ENCODE measurements at regions of chr10 and their contacts with region 1.

Region 1: DNA sequence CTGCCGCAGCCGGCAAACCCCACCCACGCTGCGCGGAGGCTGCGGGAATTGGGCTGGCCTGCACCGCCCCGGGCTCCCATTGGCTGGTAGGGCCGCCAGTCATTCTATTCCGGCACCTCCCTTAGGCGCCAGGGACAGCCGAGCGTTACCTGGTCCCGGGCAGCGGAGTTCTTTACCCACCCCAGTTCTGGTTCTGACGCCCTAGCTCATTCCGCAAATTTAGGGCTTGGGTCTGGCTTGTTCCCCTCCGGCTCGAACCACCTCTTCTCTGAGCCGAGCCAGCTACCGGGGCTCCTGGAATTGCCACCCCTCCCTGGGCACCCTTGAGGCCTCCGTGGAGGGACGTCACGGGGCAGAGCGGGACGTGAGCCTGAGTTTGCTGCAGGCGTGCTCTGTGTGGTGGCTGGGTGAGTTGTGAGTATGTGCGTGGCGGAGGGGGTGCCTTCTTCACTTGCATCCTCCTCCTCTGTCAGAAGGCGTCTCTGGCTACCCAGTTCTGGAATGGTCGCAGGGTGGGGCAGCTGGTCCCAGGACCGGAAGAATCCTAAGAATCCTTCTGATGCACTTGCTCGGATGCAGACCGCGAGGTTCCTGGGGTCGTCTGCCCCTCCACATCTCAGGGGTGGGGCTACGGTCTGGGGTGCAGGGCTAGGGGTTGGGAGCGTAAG is at the starts of genes PDZD7 and SFXN3:
- DNase-seq: peak; percentile 95 to 96 (median 96)
- H3K4me3 ChIP-seq: peak within 1 kb of the TSS; percentile 95 to 99
- H3K4me3 Mint-ChIP-seq: peak within 1 kb of the TSS; percentile 92 to 100 (median 96)
- H3K27ac ChIP-seq: peak within 1 kb of the TSS; percentile 92
- H3K27ac Mint-ChIP-seq: peak within 1 kb of the TSS; percentile 93 to 100 (median 99)
- H3K4me1 ChIP-seq: peaks cover 20% of the 10 kb centered on the region
- H3K4me1 Mint-ChIP-seq: peaks cover 10 to 34% (median 15%) of the 10 kb centered on the region in 4 donors
- H3K27me3 ChIP-seq: no peaks in the 10 kb centered on the region
- H3K27me3 Mint-ChIP-seq: no peaks in the 10 kb centered on the region
- total RNA-seq, gene PDZD7: 1.1 to 1.8 TPM
- total RNA-seq, gene SFXN3: 118 to 123 TPM

Region 2: DNA sequence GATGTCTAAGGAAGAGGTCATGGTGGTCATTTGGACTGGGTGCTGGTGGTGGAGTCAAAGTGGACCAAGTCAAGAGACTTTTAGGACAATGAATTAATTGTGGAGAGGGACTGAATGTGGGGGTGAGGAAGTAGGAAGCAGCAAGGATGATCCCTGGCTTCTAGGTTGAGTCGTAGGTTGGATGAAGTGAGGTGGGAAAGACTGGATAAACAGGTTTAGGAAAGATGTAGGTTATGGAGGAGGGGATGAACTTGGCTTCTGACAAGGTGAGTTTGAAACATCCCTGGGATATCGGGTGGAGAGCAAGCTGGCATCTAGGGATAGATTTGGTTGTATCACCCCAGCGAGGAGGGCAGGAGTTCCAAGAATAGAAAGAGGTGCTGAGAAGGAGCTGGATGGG is 54.4 kb before region 1 on chr10:
- CTCF ChIA-PET with region 1: no interaction called
- POLR2A ChIA-PET with region 1: no interaction called
- intact Hi-C with region 1: no loop called
- DNase-seq: no peak
- H3K4me3 ChIP-seq: no peak overlapping the region
- H3K4me3 Mint-ChIP-seq: no peak overlapping the region
- H3K27ac ChIP-seq: no peak overlapping the region
- H3K27ac Mint-ChIP-seq: peak overlapping the region in 4 of 7 donors; percentile 14 to 54 (median 46)
- H3K4me1 ChIP-seq: no peaks in the 10 kb centered on the region
- H3K4me1 Mint-ChIP-seq: peaks cover 0 to 3% (median under 1%) of the 10 kb centered on the region in 4 donors
- H3K27me3 ChIP-seq: no peaks in the 10 kb centered on the region
- H3K27me3 Mint-ChIP-seq: no peaks in the 10 kb centered on the region

Region 3: DNA sequence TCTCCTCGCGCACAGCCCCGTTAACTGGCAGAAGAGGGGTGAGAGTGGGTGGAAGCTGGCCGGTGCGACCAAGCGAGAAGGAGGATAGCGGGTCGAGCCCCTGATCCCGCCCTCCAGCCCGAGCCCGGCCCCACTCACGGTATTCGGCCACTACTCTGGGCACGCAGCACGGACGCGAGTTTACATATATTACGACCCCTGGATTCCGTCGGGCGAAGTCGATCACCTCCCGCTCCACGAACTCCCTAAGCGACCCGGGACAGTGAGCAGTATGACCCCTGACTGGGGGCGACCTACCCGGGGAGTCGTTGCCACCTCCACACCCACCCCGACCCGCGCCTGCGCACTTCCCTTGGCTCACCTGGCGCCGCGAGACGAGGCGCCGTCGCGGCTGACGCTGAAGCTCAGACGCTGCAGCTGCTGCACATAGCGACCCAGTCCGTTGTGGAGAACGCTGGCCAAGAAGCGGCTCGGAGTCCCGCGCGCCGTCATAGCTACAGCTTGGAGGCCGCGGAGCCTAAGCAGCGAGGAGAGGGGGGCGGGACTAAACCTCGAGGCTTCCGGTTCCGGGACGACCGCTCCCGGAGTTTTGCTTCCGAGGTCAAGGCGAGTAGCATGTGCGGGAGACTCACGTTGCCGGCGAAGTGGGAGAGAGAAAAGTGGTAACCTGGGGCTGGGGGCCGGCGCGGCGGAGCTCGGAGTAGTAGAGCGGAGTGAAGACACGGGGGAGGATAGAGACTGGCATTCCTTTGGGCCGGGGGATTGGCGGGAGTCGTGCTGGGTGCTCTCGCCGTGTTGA is 44.1 kb before region 1 on chr10 and contains the starts of genes MRPL43 and TWNK:
- CTCF ChIA-PET with region 1: interaction called, 4 read pairs
- POLR2A ChIA-PET with region 1: interaction called, 10 read pairs
- intact Hi-C with region 1: loop called (anchors 2 kb)
- DNase-seq: peak; percentile 83 to 90 (median 86)
- H3K4me3 ChIP-seq: peak within 1 kb of the TSS; percentile 67 to 91
- H3K4me3 Mint-ChIP-seq: peak within 1 kb of the TSS; percentile 85 to 98 (median 94)
- H3K27ac ChIP-seq: peak within 1 kb of the TSS; percentile 71
- H3K27ac Mint-ChIP-seq: peak within 1 kb of the TSS; percentile 41 to 97 (median 92)
- H3K4me1 ChIP-seq: peaks cover 25% of the 10 kb centered on the region
- H3K4me1 Mint-ChIP-seq: peaks cover 16 to 44% (median 32%) of the 10 kb centered on the region in 4 donors
- H3K27me3 ChIP-seq: no peaks in the 10 kb centered on the region
- H3K27me3 Mint-ChIP-seq: no peaks in the 10 kb centered on the region
- total RNA-seq, gene MRPL43: 65.8 to 71.6 TPM
- total RNA-seq, gene TWNK: 11.5 to 14.3 TPM

Region 4: GRCh38 chr10:101018600-101019439 is 12.4 kb before region 1 on chr10:
- CTCF ChIA-PET with region 1: interaction called, 25 read pairs
- POLR2A ChIA-PET with region 1: interaction called, 13 read pairs
- intact Hi-C with region 1: loop called (anchors 1 kb)
- DNase-seq: peak; percentile 53 to 68 (median 59)
- H3K4me3 ChIP-seq: no peak overlapping the region
- H3K4me3 Mint-ChIP-seq: no peak overlapping the region
- H3K27ac ChIP-seq: no peak overlapping the region
- H3K27ac Mint-ChIP-seq: no peak overlapping the region
- H3K4me1 ChIP-seq: peaks cover 7% of the 10 kb centered on the region
- H3K4me1 Mint-ChIP-seq: peaks cover 5 to 10% (median 6%) of the 10 kb centered on the region in 4 donors
- H3K27me3 ChIP-seq: peaks cover 11% of the 10 kb centered on the region
- H3K27me3 Mint-ChIP-seq: peaks cover 25 to 32% of the 10 kb centered on the region in 2 donors

Region 5: DNA sequence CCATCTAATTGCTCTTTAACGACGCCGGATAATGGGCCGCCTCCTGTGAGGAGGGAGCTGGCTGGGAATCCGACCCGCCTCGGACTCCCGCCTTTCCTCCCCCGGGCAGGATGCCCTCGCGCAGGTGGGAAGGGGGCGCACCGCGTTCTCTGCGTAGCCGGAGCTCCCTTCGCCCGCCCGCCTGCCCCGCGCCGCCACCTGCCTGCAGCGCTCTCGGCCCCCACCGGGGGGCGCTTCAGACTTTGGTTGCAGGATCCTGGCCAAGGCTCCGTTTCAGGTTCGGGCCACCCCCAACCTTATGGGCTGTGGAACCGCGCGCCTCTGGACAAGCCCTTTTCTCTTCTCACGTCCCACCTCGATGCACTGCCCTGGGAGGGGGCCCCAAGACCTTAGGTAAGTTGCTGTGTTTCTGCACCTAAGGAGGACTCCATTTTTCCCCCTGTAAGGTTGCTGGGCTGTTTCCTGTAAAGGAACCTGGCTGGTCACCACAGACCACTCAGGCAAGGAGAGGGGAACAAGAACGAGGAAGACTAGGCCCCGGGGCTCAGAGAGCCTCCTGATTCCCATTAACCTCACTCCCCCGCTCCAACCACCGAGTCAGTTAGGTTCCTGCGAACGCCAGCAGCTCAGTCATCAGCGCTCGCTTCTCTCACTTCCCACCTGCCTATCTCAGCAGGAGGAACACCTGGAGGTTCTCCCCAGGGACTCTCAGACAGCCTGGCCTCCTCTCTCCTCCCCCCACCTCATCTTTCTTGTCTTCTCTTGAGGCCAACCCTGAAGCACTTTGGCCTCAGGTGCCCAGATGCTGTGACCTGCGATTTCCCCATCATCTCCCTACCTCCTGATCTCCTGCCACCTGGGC is 19.2 kb after region 1 on chr10:
- CTCF ChIA-PET with region 1: interaction called, 645 read pairs
- POLR2A ChIA-PET with region 1: interaction called, 4 read pairs
- intact Hi-C with region 1: no loop called
- DNase-seq: peak; percentile 72 to 81 (median 73)
- H3K4me3 ChIP-seq: no peak overlapping the region
- H3K4me3 Mint-ChIP-seq: peak overlapping the region in 6 of 8 donors; percentile 13 to 65 (median 41)
- H3K27ac ChIP-seq: no peak overlapping the region
- H3K27ac Mint-ChIP-seq: peak overlapping the region in 1 of 7 donors; percentile 75
- H3K4me1 ChIP-seq: peaks cover 10% of the 10 kb centered on the region
- H3K4me1 Mint-ChIP-seq: peaks cover 3 to 25% (median 8%) of the 10 kb centered on the region in 4 donors
- H3K27me3 ChIP-seq: peaks cover 33% of the 10 kb centered on the region
- H3K27me3 Mint-ChIP-seq: peaks cover 35 to 38% of the 10 kb centered on the region in 2 donors

Region 6: DNA sequence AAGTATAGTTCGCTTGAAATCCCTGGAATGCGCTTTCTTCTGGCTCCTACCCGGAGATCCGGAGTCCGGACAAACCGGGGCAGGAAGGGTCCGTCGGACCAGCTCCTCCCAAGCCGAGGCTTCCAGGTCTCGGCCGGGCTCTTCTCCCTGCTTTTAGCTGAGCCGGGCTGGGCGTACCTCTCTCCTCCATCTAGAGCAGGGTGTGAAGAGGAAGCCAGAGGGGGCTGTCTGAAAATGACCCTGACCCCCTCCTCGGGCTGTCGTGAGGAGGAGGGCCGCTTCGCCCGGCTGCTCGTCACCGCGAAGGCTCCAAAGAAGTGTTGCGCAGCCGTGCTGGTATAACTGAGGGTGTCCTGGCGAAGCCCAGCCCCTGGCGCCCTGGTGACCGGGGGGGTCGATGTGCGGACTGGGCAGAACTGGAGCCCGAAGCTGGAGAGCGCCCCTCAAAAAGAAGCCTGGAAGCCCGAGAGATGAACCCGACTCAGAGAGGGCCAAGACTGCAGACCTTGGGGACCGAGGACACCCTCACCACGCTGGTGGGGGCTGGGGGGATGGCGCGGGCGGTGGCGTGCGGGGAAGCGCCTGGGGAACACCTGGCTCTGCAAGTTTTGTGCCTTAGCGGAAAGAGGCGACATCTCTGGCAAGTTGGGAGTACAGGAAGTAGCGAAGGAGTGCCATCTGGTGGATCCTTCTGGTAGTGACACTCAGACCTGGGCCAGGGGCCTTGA is 36.3 kb after region 1 on chr10:
- CTCF ChIA-PET with region 1: interaction called, 645 read pairs
- POLR2A ChIA-PET with region 1: interaction called, 17 read pairs
- intact Hi-C with region 1: no loop called
- DNase-seq: peak; percentile 68 to 78 (median 72)
- H3K4me3 ChIP-seq: peak overlapping the region; percentile 52 to 76
- H3K4me3 Mint-ChIP-seq: peak overlapping the region; percentile 90 to 97 (median 92)
- H3K27ac ChIP-seq: no peak overlapping the region
- H3K27ac Mint-ChIP-seq: peak overlapping the region in 3 of 7 donors; percentile 4 to 75 (median 24)
- H3K4me1 ChIP-seq: peaks cover 28% of the 10 kb centered on the region
- H3K4me1 Mint-ChIP-seq: peaks cover 4 to 32% (median 10%) of the 10 kb centered on the region in 4 donors
- H3K27me3 ChIP-seq: peaks cover 45% of the 10 kb centered on the region
- H3K27me3 Mint-ChIP-seq: peaks cover 23 to 44% of the 10 kb centered on the region in 2 donors

Region 7: GRCh38 chr10:101258179-101258885 is 227.1 kb after region 1 on chr10:
- CTCF ChIA-PET with region 1: no interaction called
- POLR2A ChIA-PET with region 1: no interaction called
- intact Hi-C with region 1: no loop called
- DNase-seq: no peak
- H3K4me3 ChIP-seq: no peak overlapping the region
- H3K4me3 Mint-ChIP-seq: no peak overlapping the region
- H3K27ac ChIP-seq: no peak overlapping the region
- H3K27ac Mint-ChIP-seq: no peak overlapping the region
- H3K4me1 ChIP-seq: no peaks in the 10 kb centered on the region
- H3K4me1 Mint-ChIP-seq: peaks cover 0 to 4% (median 0%) of the 10 kb centered on the region in 4 donors
- H3K27me3 ChIP-seq: no peaks in the 10 kb centered on the region
- H3K27me3 Mint-ChIP-seq: peaks cover 16 to 44% of the 10 kb centered on the region in 2 donors